IMR-90 (cell line): ENCODE measurements at regions of chr9 and their contacts with region 1.

Region 1: GRCh38 chr9:127122176-127123063 is at the start of gene ANGPTL2:
- DNase-seq: peak; percentile 95
- ATAC-seq: peak; percentile 92
- H3K4me3 ChIP-seq: peak within 1 kb of the TSS; percentile 69
- H3K27ac ChIP-seq: peak within 1 kb of the TSS; percentile 83
- H3K4me1 ChIP-seq: peaks cover 27% of the 10 kb centered on the region
- H3K27me3 ChIP-seq: no peaks in the 10 kb centered on the region
- CTCF ChIP-seq: no peak
- POLR2A ChIP-seq: peak; percentile 94
- RAD21 ChIP-seq: peak; percentile 3
- total RNA-seq, gene ANGPTL2: 9.5 and 14.7 TPM in 2 replicates

Region 2: DNA sequence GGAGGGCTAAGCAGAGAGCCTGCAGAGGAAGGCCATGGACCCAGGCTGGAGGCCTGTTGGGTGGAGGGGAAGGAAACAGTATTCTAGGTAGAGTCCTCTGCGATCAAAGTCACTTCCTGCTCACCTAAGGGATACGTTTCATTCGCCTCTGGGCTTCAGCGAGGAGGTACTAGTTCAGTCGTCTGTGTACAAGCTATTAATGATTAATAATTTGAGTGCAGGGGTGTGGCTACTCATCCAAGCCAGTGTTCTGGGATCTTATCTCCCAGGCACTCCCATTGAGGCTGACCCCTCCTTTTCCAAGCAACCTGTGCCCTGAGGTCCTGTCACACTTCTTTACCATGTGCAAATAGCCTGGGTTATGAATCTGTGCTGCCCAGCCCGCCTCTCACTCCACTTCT is 182.6 kb before region 1 on chr9:
- CTCF ChIA-PET with region 1: no interaction called
- POLR2A ChIA-PET with region 1: no interaction called
- dilution Hi-C with region 1: no loop called
- in situ Hi-C with region 1: no loop called
- intact Hi-C with region 1: loop called (anchors 1 kb)
- DNase-seq: no peak
- ATAC-seq: no peak
- H3K4me3 ChIP-seq: no peak overlapping the region
- H3K27ac ChIP-seq: no peak overlapping the region
- H3K4me1 ChIP-seq: peaks cover 2% of the 10 kb centered on the region; the same call in 1 of the 2 replicates
- H3K27me3 ChIP-seq: no peaks in the 10 kb centered on the region
- CTCF ChIP-seq: no peak
- POLR2A ChIP-seq: no peak
- RAD21 ChIP-seq: no peak

Region 3: DNA sequence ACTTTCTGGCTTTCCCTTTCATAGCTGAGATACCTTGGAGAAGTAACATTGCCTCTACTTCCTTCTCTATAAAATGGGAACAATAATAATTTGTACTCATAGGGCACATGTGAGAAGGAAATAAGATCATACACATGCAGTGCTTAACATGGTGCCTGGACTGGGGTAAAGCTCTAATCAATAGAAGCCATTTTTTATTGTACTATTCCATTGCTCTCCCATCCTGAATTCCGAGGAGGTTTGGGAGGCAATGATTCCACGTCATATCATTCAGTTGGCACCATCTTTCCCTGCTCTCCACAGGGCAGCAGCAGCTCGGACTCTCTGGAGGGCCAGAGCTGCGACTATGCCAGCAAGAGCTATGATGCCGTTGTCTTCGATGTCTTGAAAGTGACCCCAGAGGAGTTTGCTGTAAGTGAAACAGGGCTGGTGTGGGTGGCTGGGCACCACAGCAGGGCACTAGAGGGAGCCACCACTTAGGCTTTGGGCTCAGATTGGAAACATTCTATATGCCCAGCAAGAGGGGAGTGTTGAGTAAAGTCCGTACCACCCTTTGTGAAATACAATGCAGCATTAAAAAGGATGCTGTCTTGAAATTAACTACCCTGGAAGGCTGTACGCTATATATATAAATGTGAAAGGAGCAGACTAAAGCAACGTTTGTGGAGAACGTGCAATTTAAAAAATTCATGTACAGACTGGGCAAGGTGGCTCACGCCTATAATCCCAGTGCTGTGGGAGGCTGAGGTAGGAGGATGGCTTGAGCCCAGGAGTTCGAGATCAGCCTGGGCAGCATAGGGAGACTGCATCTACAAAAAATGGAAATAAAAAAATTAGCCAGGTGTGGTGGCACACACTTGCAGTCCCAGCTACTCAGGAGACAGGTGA is 156.6 kb before region 1 on chr9:
- CTCF ChIA-PET with region 1: interaction called, 3 read pairs
- POLR2A ChIA-PET with region 1: no interaction called
- dilution Hi-C with region 1: no loop called
- in situ Hi-C with region 1: no loop called
- intact Hi-C with region 1: loop called (anchors 1 kb)
- DNase-seq: peak; percentile 61
- ATAC-seq: peak; percentile 95
- H3K4me3 ChIP-seq: no peak overlapping the region
- H3K27ac ChIP-seq: no peak overlapping the region
- H3K4me1 ChIP-seq: peaks cover 2% of the 10 kb centered on the region; the same call in 1 of the 2 replicates
- H3K27me3 ChIP-seq: no peaks in the 10 kb centered on the region
- CTCF ChIP-seq: peak; percentile 86
- POLR2A ChIP-seq: peak; percentile 31; the same call in 1 of the 2 replicates
- RAD21 ChIP-seq: peak; percentile 95

Region 4: GRCh38 chr9:127098916-127099553 is 23.4 kb before region 1 on chr9:
- CTCF ChIA-PET with region 1: no interaction called
- POLR2A ChIA-PET with region 1: no interaction called
- dilution Hi-C with region 1: no loop called
- in situ Hi-C with region 1: no loop called
- intact Hi-C with region 1: no loop called
- DNase-seq: no peak
- ATAC-seq: no peak
- H3K4me3 ChIP-seq: no peak overlapping the region
- H3K27ac ChIP-seq: no peak overlapping the region
- H3K4me1 ChIP-seq: peaks cover 14% of the 10 kb centered on the region
- H3K27me3 ChIP-seq: no peaks in the 10 kb centered on the region
- CTCF ChIP-seq: no peak
- POLR2A ChIP-seq: no peak
- RAD21 ChIP-seq: no peak

Region 5: GRCh38 chr9:127159325-127159801 is 36.9 kb after region 1 on chr9:
- CTCF ChIA-PET with region 1: interaction called, 3 read pairs
- POLR2A ChIA-PET with region 1: interaction called, 8 read pairs
- dilution Hi-C with region 1: no loop called
- in situ Hi-C with region 1: no loop called
- intact Hi-C with region 1: loop called (anchors 1 kb)
- DNase-seq: peak; percentile 92
- ATAC-seq: peak; percentile 76
- H3K4me3 ChIP-seq: no peak overlapping the region
- H3K27ac ChIP-seq: peak overlapping the region; percentile 36; the same call in 1 of the 2 replicates
- H3K4me1 ChIP-seq: peaks cover 21% of the 10 kb centered on the region
- H3K27me3 ChIP-seq: no peaks in the 10 kb centered on the region
- CTCF ChIP-seq: peak; percentile 52
- POLR2A ChIP-seq: no peak
- RAD21 ChIP-seq: peak; percentile 58

Region 6: GRCh38 chr9:127177236-127177635 is 54.8 kb after region 1 on chr9:
- CTCF ChIA-PET with region 1: no interaction called
- POLR2A ChIA-PET with region 1: no interaction called
- dilution Hi-C with region 1: no loop called
- in situ Hi-C with region 1: no loop called
- intact Hi-C with region 1: no loop called
- DNase-seq: no peak
- ATAC-seq: no peak
- H3K4me3 ChIP-seq: no peak overlapping the region
- H3K27ac ChIP-seq: no peak overlapping the region
- H3K4me1 ChIP-seq: peaks cover 12% of the 10 kb centered on the region
- H3K27me3 ChIP-seq: no peaks in the 10 kb centered on the region
- CTCF ChIP-seq: no peak
- POLR2A ChIP-seq: no peak
- RAD21 ChIP-seq: no peak

Region 7: DNA sequence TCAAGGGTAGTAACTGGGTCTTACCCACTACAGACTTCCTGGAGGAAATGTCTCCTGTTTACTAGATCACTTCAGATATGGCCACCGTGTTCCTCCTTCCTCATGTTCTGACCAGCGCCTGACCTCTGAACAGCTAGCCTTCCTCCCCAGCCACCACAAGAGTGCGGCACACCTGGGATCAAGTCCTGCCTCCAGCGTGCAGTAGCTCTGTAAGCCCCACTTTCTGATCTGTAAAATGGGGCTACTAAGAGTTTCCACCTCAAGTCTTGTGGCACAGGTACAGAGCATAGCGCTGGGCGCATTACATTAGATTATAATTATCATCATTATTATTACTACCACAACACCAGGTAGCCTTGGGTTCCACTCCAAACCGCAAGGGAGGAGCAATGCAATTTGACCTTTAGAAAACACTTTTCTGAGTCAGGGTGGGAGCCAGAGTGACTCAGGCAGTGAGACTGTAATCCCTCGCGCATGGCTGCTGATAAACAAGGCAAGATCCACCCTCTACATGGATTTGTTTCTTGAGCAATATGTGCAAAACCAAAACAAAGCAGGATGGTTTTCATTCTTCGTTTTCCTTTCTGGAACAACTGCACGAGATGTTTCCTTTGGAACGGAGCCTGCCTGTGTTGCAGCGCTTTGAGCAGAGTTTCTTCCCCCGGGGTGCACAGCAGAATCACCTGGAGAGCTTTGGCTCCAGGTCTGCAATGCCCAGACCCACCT is 65.0 kb after region 1 on chr9:
- CTCF ChIA-PET with region 1: no interaction called
- POLR2A ChIA-PET with region 1: no interaction called
- dilution Hi-C with region 1: no loop called
- in situ Hi-C with region 1: loop called (anchors 5 kb)
- intact Hi-C with region 1: loop called (anchors 1 kb)
- DNase-seq: peak; percentile 99
- ATAC-seq: peak; percentile 81
- H3K4me3 ChIP-seq: no peak overlapping the region
- H3K27ac ChIP-seq: peak overlapping the region; percentile 97
- H3K4me1 ChIP-seq: peaks cover 37% of the 10 kb centered on the region
- H3K27me3 ChIP-seq: no peaks in the 10 kb centered on the region
- CTCF ChIP-seq: no peak
- POLR2A ChIP-seq: no peak
- RAD21 ChIP-seq: peak; percentile 17